ENCODE measurements at regions of chr18 and their contacts with region 1.

Region 1: GRCh38 chr18:72762515-72763122 is 105.2 kb downstream of the NETO1 start:
- DNase-seq: no peak
- H3K4me3 Mint-ChIP-seq: no peak overlapping the region
- H3K27ac Mint-ChIP-seq: no peak overlapping the region
- H3K4me1 Mint-ChIP-seq: no peaks in the 10 kb centered on the region
- H3K27me3 Mint-ChIP-seq: no peaks in the 10 kb centered on the region

Region 2: GRCh38 chr18:72492497-72492896 is 270.1 kb before region 1 on chr18:
- intact Hi-C with region 1: no loop called
- DNase-seq: no peak
- H3K4me3 Mint-ChIP-seq: no peak overlapping the region
- H3K27ac Mint-ChIP-seq: no peak overlapping the region
- H3K4me1 Mint-ChIP-seq: no peaks in the 10 kb centered on the region
- H3K27me3 Mint-ChIP-seq: no peaks in the 10 kb centered on the region

Region 3: DNA sequence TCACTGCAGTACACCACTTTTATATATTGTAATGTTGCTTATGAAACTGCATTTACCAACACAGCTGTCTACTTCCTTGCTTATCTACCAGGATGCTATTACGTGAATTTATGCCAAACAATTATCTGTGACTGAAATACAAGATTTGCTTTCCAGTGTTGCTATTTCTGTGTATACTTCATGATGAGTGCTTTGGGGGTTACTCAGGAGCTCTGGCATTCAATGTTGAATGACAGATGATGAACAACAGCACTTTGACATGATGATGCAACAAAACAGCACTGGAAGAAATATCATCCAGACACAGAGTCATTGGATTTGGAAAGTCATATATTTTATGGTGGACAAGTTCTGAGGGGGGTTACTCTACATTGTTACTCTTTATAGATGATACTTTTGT is 20.6 kb before region 1 on chr18:
- intact Hi-C with region 1: no loop called
- DNase-seq: no peak
- H3K4me3 Mint-ChIP-seq: no peak overlapping the region
- H3K27ac Mint-ChIP-seq: no peak overlapping the region
- H3K4me1 Mint-ChIP-seq: no peaks in the 10 kb centered on the region
- H3K27me3 Mint-ChIP-seq: no peaks in the 10 kb centered on the region

Region 4: GRCh38 chr18:73842795-73843394 is 1080.3 kb after region 1 on chr18:
- intact Hi-C with region 1: loop called (anchors 2 kb)
- DNase-seq: peak; percentile 11
- H3K4me3 Mint-ChIP-seq: no peak overlapping the region
- H3K27ac Mint-ChIP-seq: no peak overlapping the region
- H3K4me1 Mint-ChIP-seq: peaks cover 2% of the 10 kb centered on the region
- H3K27me3 Mint-ChIP-seq: no peaks in the 10 kb centered on the region